GM10248 (cell line): ENCODE measurements at regions of chr6 and their contacts with region 1.

Region 1: DNA sequence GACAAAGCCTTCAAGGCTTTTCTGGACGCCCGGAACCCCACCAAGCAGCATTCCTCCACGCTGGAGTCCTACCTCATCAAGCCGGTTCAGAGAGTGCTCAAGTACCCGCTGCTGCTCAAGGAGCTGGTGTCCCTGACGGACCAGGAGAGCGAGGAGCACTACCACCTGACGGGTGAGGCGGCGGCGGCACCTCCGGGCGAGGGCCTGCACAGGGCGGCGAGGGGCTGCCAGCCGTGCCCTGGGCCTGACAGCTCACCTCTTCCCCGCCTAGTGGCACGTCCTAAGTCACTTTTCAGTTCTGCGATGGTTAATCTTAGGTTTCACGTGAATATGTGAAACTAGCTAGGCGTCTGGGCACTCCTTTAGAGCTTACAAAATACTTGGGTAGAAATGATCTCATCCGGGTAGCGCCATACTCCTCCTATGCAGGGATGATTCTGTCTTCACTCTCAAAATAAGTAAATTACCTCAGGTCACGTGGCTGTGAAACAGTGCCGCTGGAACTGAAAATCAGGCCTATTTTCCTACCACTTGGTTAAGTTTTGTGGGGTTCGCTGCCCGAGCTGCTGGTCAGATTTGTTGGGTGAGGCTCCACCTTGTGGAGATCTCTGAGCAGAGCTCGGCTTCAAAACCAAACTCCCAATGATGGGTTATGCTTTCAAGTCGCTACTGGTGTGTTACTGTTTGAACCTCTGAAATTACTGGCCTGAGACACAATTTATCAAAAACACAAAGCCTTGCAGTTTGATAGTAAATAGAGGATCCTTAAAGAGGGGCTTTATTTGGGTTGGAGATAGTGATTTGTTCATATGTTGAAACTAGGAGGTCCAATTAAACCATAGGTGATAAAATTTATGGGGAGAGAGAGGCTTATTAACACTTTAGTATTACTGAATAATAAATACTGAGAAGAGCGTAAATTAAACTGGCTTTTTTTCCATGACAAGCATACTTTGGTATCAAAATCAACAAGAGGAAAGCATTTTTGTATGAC is 15.5 kb upstream of the CLDN20 start:
- DNase-seq: peak; percentile 64
- CTCF ChIP-seq: peak; percentile 44

Region 2: GRCh38 chr6:155181498-155181897 is 66.8 kb before region 1 on chr6:
- CTCF ChIA-PET with region 1: interaction called, 71 read pairs
- POLR2A ChIA-PET with region 1: interaction called, 3 read pairs
- DNase-seq: peak; percentile 49
- CTCF ChIP-seq: no peak

Region 3: GRCh38 chr6:155235087-155235486 is 13.2 kb before region 1 on chr6:
- CTCF ChIA-PET with region 1: interaction called, 38 read pairs
- POLR2A ChIA-PET with region 1: no interaction called
- DNase-seq: no peak
- CTCF ChIP-seq: no peak

Region 4: DNA sequence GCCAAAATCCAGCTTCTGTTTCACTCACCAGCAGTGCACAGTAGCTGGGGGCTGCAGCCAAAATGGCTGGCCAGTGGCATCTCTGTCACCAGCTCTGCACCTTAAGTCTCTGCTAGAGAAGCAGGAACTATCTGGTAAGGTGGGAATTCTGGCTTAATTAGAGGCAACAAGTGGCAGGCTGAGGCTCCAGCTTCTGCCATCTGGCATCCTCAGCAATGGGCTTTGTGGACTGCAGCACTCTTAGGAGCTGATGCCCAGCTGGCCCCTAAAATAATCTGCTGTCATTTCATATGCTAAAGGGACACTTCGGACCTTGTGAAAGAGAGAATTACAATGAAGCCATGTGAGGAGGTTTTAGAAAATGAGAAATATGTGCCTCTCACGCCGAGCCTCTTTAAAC is 10.9 kb after region 1 on chr6:
- CTCF ChIA-PET with region 1: interaction called, 16 read pairs
- POLR2A ChIA-PET with region 1: no interaction called
- DNase-seq: no peak
- CTCF ChIP-seq: no peak